PC-9 (cell line): ENCODE measurements at regions of chr5 and their contacts with region 1.

Region 1: GRCh38 chr5:172454358-172455086 is at the start of gene SH3PXD2B:
- DNase-seq: peak in 1 of 2 experiments; percentile 70
- H3K4me3 ChIP-seq: peak within 1 kb of the TSS; percentile 76
- H3K27ac ChIP-seq: no peak within 1 kb of the TSS
- H3K4me1 ChIP-seq: peaks cover 18% of the 10 kb centered on the region
- H3K27me3 ChIP-seq: no peaks in the 10 kb centered on the region
- CTCF ChIP-seq: no peak
- total RNA-seq, gene SH3PXD2B: 26.1 and 29.3 TPM in 2 replicates

Region 2: GRCh38 chr5:171913987-171914273 is 540.6 kb before region 1 on chr5:
- CTCF ChIA-PET with region 1: no interaction called
- POLR2A ChIA-PET with region 1: interaction called, 4 read pairs
- intact Hi-C with region 1: loop called (anchors 2 kb)
- DNase-seq: no peak
- H3K4me3 ChIP-seq: no peak overlapping the region
- H3K27ac ChIP-seq: no peak overlapping the region
- H3K4me1 ChIP-seq: no peaks in the 10 kb centered on the region
- H3K27me3 ChIP-seq: no peaks in the 10 kb centered on the region
- CTCF ChIP-seq: no peak

Region 3: GRCh38 chr5:172267943-172268342 is 186.6 kb before region 1 on chr5:
- CTCF ChIA-PET with region 1: no interaction called
- POLR2A ChIA-PET with region 1: no interaction called
- intact Hi-C with region 1: no loop called
- DNase-seq: no peak
- H3K4me3 ChIP-seq: no peak overlapping the region
- H3K27ac ChIP-seq: no peak overlapping the region
- H3K4me1 ChIP-seq: no peaks in the 10 kb centered on the region
- H3K27me3 ChIP-seq: no peaks in the 10 kb centered on the region
- CTCF ChIP-seq: no peak

Region 4: GRCh38 chr5:172283020-172283861 is 171.3 kb before region 1 on chr5 and contains the start of gene UBTD2:
- CTCF ChIA-PET with region 1: no interaction called
- POLR2A ChIA-PET with region 1: interaction called, 3 read pairs
- intact Hi-C with region 1: loop called (anchors 2 kb)
- DNase-seq: peak; percentile 59 to 91
- H3K4me3 ChIP-seq: peak within 1 kb of the TSS; percentile 98
- H3K27ac ChIP-seq: peak within 1 kb of the TSS; percentile 46
- H3K4me1 ChIP-seq: peaks cover 25% of the 10 kb centered on the region
- H3K27me3 ChIP-seq: no peaks in the 10 kb centered on the region
- CTCF ChIP-seq: peak; percentile 62
- total RNA-seq, gene UBTD2: 16.4 and 21.7 TPM in 2 replicates

Region 5: DNA sequence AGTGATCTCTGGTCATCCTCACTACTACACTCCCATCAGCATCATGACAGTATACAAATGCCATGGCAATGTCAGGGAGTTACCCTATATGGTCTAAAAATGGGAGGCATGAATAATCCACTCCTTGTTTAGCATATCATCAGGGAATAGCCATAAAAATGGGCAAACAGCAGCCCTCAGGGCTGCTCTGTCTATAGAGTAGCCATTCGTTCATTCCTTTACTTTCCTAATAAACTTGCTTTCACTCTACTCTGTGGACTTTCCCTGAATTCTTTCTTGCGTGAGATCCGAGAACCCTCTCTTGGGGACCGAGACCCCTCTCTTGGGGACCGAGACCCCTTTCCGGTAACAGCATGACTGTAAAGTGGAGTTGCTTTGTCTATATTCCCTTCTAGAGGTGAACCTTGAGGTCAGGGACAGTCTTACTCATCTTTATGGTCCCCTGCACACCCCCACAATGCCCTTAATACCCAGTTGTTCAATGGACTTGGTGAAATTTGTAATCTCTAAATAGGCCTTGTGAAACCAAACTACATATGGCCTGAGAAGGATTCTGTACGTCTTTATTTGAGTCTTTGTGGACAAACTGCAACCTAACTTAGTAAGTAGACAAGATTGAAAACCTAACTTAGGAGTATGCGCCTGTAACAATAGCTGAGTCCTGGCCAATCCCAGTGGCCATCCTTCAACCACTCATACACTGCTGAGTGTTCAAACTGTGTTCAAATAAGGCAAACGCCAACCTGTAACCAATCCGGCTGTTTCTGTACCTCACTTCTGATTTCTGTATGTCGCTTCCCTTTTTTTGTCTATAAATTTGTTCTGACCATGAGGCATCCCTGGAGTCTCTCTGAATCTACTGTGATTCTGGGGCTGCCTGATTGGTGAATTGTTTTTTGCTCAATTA is 138.7 kb before region 1 on chr5:
- CTCF ChIA-PET with region 1: interaction called, 20 read pairs
- POLR2A ChIA-PET with region 1: no interaction called
- intact Hi-C with region 1: no loop called
- DNase-seq: no peak
- H3K4me3 ChIP-seq: no peak overlapping the region; the same call in 1 of the 2 replicates
- H3K27ac ChIP-seq: peak overlapping the region; percentile 96
- H3K4me1 ChIP-seq: peaks cover 37% of the 10 kb centered on the region
- H3K27me3 ChIP-seq: no peaks in the 10 kb centered on the region
- CTCF ChIP-seq: no peak

Region 6: GRCh38 chr5:172383191-172383802 is 71.2 kb before region 1 on chr5:
- CTCF ChIA-PET with region 1: no interaction called
- POLR2A ChIA-PET with region 1: no interaction called
- intact Hi-C with region 1: loop called (anchors 1 kb)
- DNase-seq: peak; percentile 47 to 98
- H3K4me3 ChIP-seq: no peak overlapping the region
- H3K27ac ChIP-seq: peak overlapping the region; percentile 48
- H3K4me1 ChIP-seq: peaks cover 25% of the 10 kb centered on the region
- H3K27me3 ChIP-seq: no peaks in the 10 kb centered on the region
- CTCF ChIP-seq: no peak